ENCODE measurements at regions of chr16 and their contacts with region 1.

Region 1: DNA sequence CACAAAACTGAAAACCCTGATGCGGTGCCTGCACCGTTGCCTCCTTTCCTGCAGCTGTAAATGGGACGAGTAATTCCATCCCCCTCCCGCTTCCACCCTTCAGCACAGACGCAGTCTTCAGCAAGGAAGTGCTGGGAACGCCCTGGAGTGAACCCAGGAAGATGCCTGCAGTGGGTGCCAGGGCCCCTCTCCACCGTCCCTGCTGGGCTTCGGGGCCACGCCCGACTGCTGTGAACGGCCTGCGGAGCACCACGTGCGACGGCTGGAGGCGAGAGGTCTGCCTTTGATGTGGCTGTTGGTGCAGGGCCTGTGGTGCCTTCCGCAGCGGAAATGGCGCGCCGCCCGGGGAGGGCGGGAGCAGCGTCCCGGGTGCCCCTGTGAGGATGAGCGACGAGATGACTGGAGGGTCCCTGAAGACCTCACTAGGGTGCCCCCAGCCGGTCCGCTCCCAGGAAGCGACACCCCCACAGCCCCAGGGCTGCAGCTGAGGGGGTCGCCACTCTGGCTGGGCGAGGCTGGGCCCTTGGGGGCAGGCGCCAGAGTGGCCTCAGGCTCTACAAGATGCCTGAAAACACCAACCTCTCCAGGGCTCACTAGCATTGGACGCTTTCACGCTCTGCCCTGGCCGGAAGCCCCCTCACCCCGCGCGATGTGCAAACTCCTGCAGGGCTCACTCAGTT is 749 bp upstream of the MC1R start:
- DNase-seq: peak; percentile 92
- ATAC-seq: peak; percentile 74

Region 2: DNA sequence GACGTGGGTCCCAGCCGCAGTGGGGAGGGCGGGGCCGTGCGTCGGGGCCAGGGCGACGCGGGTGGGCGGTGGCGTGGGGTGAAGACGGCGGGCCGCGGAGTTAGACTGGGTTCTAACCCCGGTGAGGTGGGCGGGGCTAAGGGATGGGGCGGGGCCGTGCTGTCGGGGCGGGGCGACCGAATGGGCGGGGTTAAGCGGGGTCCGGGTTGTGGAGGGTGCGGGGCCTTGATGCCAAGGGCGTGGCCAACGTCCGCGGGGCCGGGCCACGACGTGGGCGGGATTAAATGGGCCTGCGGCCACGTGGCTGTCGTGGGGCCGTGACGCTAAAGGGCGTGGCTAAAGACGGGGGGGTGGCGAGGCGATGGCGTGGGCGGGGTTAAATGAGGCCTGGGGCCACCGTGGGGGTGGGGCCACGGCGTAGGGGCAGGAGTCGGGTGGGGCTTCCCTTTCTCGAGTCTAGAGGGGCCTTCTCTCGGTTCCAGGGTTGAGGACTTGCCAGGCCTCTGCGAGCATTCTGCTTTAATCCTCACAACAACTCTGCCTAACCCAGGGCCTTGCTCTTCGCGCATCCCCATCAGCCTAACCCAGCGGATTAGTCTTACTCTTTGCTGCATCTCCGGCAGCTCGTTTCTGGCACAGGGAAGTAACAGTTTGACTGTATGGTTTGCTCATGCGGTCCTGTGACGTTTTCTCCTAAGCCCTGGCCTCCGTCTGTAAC is 43.8 kb before region 1 on chr16:
- intact Hi-C with region 1: loop called (anchors 5 kb)
- DNase-seq: peak; percentile 98
- ATAC-seq: peak; percentile 95

Measured in Right ventricle myocardium inferior (tissue), 1 donor.